ENCODE measurements at regions of chr1 and their contacts with region 1.

Region 1: GRCh38 chr1:235122348-235122747 is 6.3 kb downstream of the TOMM20 start:
- DNase-seq: no peak
- ATAC-seq: no peak
- H3K4me3 ChIP-seq: no peak overlapping the region
- H3K27ac ChIP-seq: no peak overlapping the region
- H3K4me1 ChIP-seq: peaks cover 10 to 15% of the 10 kb centered on the region in 2 experiments; a peak in 4 of 5 replicates
- H3K27me3 ChIP-seq: no peaks in the 10 kb centered on the region
- CTCF ChIP-seq: no peak
- EP300 ChIP-seq: no peak
- POLR2A ChIP-seq: no peak
- RAD21 ChIP-seq: no peak

Region 2: DNA sequence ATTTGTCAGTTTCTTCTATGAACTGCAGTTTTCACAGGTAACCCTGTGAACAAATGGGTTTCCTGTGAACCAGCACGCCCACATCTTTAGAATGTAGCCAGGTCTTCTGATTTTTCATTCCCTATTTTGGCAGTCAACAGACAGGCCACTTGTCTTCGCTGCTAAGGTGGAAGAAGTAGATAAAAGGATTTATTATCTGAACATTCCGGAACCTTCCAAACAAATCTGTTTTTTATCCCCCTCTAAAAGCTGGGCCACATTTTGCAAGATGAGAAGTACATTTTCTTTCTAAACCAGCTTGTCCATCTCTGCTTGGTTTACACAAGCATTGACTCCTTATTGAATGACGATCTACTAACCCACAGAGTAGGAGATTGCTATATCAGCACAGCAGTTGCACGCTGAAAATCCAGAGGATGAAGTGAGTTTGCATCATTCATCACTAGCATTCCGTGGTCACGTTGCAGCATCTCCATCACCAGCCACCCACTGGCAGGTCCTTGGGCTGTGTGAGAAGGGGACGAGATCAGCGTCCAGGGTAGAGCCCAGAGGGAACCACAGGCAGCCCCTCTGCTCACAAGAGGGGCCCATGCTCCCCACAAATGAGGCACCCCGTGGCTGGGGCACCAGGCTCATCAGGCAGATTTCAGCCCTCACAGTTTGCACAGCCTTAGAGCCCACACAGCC is 77.2 kb before region 1 on chr1:
- CTCF ChIA-PET with region 1: no interaction called
- POLR2A ChIA-PET with region 1: no interaction called
- in situ Hi-C with region 1: no loop called
- intact Hi-C with region 1: no loop called
- DNase-seq: no peak
- ATAC-seq: peak; percentile 43
- H3K4me3 ChIP-seq: no peak overlapping the region
- H3K27ac ChIP-seq: no peak overlapping the region
- H3K4me1 ChIP-seq: no peaks in the 10 kb centered on the region; a peak in 4 of 5 replicates
- H3K27me3 ChIP-seq: peaks cover 0 to 4% of the 10 kb centered on the region in 2 experiments; a peak in 1 of 5 replicates
- CTCF ChIP-seq: no peak
- EP300 ChIP-seq: peak; percentile 66
- POLR2A ChIP-seq: no peak
- RAD21 ChIP-seq: no peak

Region 3: DNA sequence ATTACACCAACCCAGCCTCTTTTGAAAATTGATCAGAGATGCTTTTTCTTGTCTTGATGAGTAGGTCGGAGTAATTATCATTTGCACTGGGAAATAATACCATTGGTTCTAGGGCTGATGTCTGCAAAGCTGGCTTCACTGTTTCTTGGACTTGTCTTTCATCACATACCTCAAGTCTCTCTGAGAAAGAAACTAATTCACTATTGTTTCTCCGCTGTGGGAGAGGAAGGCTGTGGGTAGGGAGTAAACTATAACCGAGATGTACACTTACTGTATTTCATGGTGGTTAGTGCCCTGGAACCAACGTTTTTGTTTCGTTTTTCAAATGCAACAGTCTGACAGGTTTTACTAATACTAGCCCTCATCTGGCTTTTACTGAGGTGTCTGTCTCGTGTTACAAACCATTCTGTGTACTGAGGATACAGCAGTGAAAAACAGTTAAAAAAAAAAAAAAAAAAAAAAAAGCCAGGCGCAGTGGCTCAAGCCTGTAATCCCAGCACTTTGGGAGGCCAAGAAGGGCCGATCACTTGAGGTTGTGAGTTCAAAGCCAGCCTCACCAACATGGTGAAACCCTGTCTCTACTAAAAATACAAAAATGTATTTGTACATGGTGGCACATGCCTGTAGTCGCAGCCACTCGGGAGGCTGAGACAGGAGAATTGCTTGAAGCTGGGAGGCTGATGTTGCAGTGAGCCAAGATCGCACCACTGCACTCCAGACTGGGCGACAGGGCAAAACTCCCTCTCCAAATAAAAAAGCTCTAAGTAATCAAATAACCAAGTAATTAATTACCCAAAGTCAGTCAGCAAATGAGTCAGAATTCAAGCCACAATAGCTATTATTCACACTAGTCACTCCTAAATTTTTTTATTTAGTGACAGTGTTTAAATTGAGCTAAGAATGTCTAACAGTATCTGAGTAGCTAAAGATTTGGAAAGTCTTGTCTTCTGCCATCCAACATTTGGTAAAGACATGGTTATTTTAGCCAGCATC is 17.0 kb before region 1 on chr1:
- CTCF ChIA-PET with region 1: interaction called, 4 read pairs
- POLR2A ChIA-PET with region 1: interaction called, 51 read pairs
- in situ Hi-C with region 1: no loop called
- intact Hi-C with region 1: no loop called
- DNase-seq: peak in 1 of 4 experiments; percentile 30
- ATAC-seq: peak; percentile 20
- H3K4me3 ChIP-seq: no peak overlapping the region
- H3K27ac ChIP-seq: peak overlapping the region; percentile 61; the same call in 2 of the 3 replicates
- H3K4me1 ChIP-seq: peaks cover 5 to 14% of the 10 kb centered on the region in 2 experiments; a peak in 4 of 5 replicates
- H3K27me3 ChIP-seq: no peaks in the 10 kb centered on the region
- CTCF ChIP-seq: no peak
- EP300 ChIP-seq: no peak
- POLR2A ChIP-seq: no peak
- RAD21 ChIP-seq: no peak; a peak in 1 of 4 replicates

Region 4: DNA sequence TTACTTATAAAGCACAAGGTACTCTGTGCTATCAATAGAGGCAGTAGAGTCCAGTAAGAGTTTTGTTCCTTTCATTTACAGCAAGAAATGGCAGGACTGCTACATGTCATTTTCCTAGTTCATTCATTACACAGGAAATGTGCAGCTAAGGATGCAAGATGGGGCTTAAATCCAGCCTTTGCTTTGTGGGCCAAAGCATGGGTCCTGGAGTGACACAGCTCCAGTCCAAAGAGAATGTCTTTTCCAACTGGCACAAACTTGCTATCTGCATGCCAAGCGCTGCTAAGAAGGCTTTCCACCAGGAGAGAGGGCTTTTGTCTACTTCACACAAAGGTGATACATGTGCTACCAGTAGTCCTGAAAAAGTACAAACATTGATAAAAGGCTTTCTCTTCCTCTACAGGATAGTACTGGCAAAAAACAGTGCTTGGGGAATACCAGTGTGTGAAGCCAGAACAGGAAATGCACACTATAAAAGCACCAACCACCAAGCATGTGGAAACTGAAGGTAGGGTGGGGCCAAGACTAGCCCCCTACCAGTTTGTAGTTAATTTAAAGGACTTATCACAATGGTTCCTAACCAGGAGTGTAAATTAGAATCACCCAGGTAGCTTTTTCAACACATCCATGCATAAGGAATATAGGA is 136.9 kb after region 1 on chr1:
- CTCF ChIA-PET with region 1: no interaction called
- POLR2A ChIA-PET with region 1: no interaction called
- in situ Hi-C with region 1: no loop called
- intact Hi-C with region 1: no loop called
- DNase-seq: no peak
- ATAC-seq: peak; percentile 29; the same call in 2 of the 3 replicates
- H3K4me3 ChIP-seq: no peak overlapping the region
- H3K27ac ChIP-seq: no peak overlapping the region
- H3K4me1 ChIP-seq: no peaks in the 10 kb centered on the region
- H3K27me3 ChIP-seq: no peaks in the 10 kb centered on the region
- CTCF ChIP-seq: no peak; a peak in 1 of 6 replicates
- EP300 ChIP-seq: no peak
- POLR2A ChIP-seq: no peak
- RAD21 ChIP-seq: no peak

Measured in K562 (cell line).